ENCODE measurements at regions of chr1 and their contacts with region 1.

Region 1: DNA sequence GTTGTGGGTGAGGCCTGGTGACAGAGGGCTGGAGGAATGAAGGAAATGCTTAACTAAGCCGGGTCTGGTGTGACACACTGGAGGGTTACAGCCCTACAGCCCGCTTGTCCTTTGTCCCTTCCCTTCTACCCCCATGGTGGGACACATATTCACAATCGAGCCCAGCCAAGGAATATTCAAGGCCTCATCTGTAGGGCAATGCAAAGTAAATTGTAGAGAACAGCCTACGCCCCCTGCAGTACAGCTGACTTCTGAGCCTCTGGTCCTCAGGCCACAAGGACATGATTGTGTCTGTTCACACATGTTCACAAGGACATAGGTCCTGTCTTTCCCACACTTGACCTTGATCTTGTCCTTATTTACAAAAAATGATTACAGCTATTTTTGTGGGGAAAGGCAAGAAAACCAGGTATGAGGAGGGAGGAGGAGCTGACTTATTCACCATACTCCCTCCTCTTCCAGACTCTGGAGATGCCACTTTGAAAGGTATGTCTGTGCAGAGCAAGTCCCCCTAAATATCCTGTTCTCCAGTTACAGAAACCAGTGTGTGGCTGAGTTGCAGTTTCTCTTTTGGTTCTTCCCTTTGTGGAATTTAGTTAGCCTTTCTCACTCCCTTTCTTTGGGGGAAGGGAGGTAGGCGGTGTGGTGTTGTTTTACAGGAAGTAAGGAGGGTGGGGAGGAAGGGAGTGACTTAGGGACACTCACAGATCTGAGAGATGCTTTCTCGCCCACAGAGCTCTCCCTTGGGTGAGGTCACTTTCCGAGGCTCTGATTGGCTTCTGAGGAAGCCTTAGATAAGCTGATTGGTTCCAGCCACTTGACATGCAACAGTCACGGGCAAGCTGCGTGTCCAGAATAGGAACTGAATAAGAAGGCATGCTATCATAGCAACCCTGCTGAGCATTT is 14.6 kb downstream of the POLR3GL start:
- DNase-seq: peak; percentile 93
- ATAC-seq: peak; percentile 89
- H3K4me3 Mint-ChIP-seq: no peak overlapping the region
- H3K27ac Mint-ChIP-seq: no peak overlapping the region
- H3K4me1 Mint-ChIP-seq: peaks cover 16% of the 10 kb centered on the region
- H3K27me3 Mint-ChIP-seq: no peaks in the 10 kb centered on the region

Region 2: GRCh38 chr1:145927063-145927886 is 51.8 kb before region 1 on chr1 and contains the start of gene RBM8A:
- CTCF ChIA-PET with region 1: interaction called, 25 read pairs
- POLR2A ChIA-PET with region 1: interaction called, 27 read pairs
- DNase-seq: peak; percentile 98
- ATAC-seq: peak; percentile 98
- H3K4me3 Mint-ChIP-seq: no peak within 1 kb of the TSS
- H3K27ac Mint-ChIP-seq: peak within 1 kb of the TSS; percentile 79
- H3K4me1 Mint-ChIP-seq: peaks cover 25% of the 10 kb centered on the region
- H3K27me3 Mint-ChIP-seq: no peaks in the 10 kb centered on the region
- total RNA-seq, gene RBM8A: 202 to 204 TPM

Region 3: GRCh38 chr1:145996433-145997015 is 17.4 kb after region 1 on chr1 and contains the start of gene TXNIP:
- CTCF ChIA-PET with region 1: interaction called, 235 read pairs
- POLR2A ChIA-PET with region 1: interaction called, 373 read pairs
- DNase-seq: peak; percentile 97
- ATAC-seq: peak; percentile 94
- H3K4me3 Mint-ChIP-seq: peak within 1 kb of the TSS; percentile 87
- H3K27ac Mint-ChIP-seq: peak within 1 kb of the TSS; percentile 95
- H3K4me1 Mint-ChIP-seq: peaks cover 59% of the 10 kb centered on the region
- H3K27me3 Mint-ChIP-seq: no peaks in the 10 kb centered on the region
- total RNA-seq, gene TXNIP: 190 to 195 TPM

Region 4: GRCh38 chr1:146007506-146008133 is 28.5 kb after region 1 on chr1:
- CTCF ChIA-PET with region 1: interaction called, 269 read pairs
- POLR2A ChIA-PET with region 1: interaction called, 61 read pairs
- DNase-seq: no peak
- ATAC-seq: no peak
- H3K4me3 Mint-ChIP-seq: peak overlapping the region; percentile 69
- H3K27ac Mint-ChIP-seq: peak overlapping the region; percentile 91
- H3K4me1 Mint-ChIP-seq: peaks cover 39% of the 10 kb centered on the region
- H3K27me3 Mint-ChIP-seq: no peaks in the 10 kb centered on the region

Region 5: DNA sequence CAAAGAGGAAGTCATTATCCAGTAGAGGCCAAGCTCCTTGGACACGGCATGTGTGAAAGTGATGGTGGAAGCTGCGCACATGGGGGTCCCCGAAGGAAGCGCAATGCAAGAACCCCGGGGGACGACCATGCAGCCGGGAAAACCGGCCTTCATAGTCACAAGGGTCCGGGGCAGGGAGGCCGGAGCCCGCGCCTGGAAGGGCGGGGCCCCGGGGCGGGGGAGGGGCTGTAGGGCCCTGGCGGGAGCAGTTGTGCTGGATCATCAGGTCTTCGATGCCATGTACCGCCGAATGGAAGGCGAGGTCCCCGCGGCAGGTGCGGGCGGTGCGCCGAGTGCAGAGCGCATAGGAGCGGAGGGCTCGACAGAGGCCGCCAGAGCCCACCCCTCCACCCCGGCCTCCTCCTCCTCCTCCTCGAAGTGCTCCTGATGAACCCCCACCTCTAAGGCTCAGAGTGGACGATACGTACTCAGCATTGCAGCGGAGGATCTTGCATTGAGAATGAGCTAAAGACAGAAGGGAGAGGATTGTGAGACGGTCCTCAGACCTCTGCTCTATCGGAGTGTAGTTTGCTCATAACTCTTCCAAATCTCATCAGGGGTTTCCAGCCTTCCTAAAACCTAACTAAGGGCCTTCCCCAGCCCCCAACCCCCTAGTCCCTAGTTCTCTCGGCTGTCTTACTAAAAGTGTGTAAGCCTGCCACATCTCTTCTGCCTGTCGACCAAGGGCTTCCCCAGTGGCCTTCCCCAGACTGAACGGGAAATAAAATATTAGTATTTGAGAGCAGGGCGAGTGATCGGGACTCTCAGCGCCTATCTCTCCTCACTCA is 40.3 kb after region 1 on chr1:
- CTCF ChIA-PET with region 1: interaction called, 269 read pairs
- POLR2A ChIA-PET with region 1: interaction called, 3 read pairs
- DNase-seq: no peak
- ATAC-seq: peak; percentile 44
- H3K4me3 Mint-ChIP-seq: no peak overlapping the region
- H3K27ac Mint-ChIP-seq: no peak overlapping the region
- H3K4me1 Mint-ChIP-seq: peaks cover 6% of the 10 kb centered on the region
- H3K27me3 Mint-ChIP-seq: peaks cover 64% of the 10 kb centered on the region

Region 6: GRCh38 chr1:146049436-146049835 is 70.3 kb after region 1 on chr1:
- CTCF ChIA-PET with region 1: interaction called, 3 read pairs
- POLR2A ChIA-PET with region 1: interaction called, 25 read pairs
- DNase-seq: no peak
- ATAC-seq: no peak
- H3K4me3 Mint-ChIP-seq: no peak overlapping the region
- H3K27ac Mint-ChIP-seq: peak overlapping the region; percentile 39
- H3K4me1 Mint-ChIP-seq: peaks cover 33% of the 10 kb centered on the region
- H3K27me3 Mint-ChIP-seq: peaks cover 5% of the 10 kb centered on the region